AG04449 (cell line): ENCODE measurements at regions of chr1 and their contacts with region 1.

Region 1: DNA sequence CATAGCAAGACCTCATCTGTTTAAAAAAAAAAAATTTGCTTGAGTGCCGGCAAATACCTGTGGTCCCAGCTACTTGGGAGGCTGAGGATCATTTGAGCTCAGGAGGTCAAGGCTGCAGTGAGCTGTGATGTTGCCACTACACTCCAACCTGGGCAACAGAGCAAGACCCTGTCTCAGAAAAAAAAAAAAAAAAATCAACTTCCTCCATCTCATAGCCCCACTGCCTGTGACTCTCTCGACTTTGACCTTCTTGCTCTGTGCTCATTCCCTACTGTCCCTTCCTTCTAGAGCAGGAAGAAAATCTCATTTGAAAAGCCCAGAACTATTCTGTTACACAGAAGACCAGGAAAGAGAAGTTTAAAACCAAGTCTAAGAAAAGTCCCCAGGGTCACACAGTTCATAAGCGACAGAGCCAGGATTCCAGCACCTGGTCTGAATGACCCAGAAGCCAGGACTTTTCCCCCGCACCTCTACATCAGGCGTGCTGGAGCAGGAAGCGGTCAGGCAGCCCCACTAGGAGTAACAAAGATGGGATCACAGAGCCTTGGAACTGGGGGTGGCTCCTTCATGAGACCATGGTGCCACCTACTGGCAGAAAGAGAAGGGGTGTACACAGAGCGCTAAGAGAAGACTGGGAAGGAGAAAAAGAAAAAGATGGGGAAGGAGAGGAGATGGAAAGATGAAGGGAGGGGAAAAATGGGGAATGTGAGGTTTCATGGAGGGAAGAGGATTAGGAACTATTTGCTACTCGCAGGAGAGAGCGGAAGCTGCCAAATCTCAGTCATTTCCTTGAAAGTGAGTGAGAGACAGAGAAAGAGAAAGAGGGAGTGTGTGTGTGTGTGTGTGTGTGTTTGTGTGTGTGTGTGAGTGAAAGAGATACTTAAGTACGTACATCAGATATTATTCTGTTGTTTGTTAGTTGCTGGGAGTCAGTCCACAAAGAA is 3.1 kb upstream of the P3R3URF start:
- DNase-seq: peak; percentile 41
- H3K4me3 ChIP-seq: no peak overlapping the region
- CTCF ChIP-seq: peak; percentile 87

Region 2: GRCh38 chr1:46062651-46063319 is 116.6 kb before region 1 on chr1:
- CTCF ChIA-PET with region 1: interaction called, 10 read pairs
- POLR2A ChIA-PET with region 1: no interaction called
- DNase-seq: no peak
- H3K4me3 ChIP-seq: no peak overlapping the region
- CTCF ChIP-seq: no peak

Region 3: DNA sequence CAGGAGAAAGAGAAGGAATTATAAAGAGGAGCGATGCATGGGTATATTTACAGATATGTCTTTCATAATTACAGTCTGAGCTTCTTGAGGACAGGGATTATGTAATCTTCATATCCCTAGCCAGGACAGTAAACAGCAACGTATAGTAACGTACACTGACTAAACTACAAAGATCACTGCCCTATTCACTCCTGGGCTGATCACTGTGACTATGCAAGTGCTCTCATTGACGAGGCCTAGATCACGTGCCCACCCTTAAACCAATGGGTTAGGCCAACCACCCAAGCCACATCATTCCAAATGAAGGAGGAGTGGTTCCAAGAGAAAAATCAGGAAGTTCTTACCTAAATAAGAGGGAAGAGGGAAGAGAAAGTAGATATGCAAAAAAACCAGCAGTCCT is 65.5 kb before region 1 on chr1:
- CTCF ChIA-PET with region 1: no interaction called
- POLR2A ChIA-PET with region 1: no interaction called
- DNase-seq: no peak
- H3K4me3 ChIP-seq: no peak overlapping the region
- CTCF ChIP-seq: no peak

Region 4: GRCh38 chr1:46166521-46167462 is 12.6 kb before region 1 on chr1:
- CTCF ChIA-PET with region 1: interaction called, 48 read pairs
- POLR2A ChIA-PET with region 1: no interaction called
- DNase-seq: no peak
- H3K4me3 ChIP-seq: peak overlapping the region; percentile 50
- CTCF ChIP-seq: no peak

Region 5: DNA sequence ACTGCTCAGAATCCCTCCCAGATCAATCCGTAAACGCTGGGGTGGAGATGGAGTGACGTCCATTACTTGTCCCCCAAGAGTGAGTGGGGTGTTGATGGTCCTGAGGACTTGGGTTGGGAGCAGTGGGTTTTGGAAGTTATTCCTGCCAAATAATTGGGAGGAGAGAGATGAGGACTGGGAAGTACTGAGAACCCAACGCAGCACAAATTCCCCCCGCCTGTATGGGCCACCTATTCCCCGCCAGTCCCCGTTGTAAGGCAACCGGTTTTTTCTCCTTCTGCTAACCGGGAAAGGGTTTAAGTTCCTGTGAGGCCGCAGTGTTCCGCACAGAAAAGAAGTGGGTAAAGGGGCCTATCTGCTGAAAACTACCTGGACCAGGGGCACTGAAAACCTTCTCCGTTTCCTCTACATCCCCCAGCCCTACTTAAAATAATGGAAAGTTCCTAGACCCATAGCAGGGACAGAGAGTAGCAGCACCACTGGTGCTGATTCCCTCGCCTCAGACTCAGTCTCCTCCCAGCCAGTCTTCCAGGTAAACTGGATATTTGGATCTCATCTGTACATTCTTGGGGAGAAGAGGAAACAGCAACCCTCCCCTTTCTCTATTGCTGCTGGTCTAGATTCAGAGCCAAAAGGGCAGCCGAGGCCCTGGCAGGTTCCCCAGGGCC is 24.5 kb after region 1 on chr1:
- CTCF ChIA-PET with region 1: interaction called, 9 read pairs
- POLR2A ChIA-PET with region 1: interaction called, 11 read pairs
- DNase-seq: no peak
- H3K4me3 ChIP-seq: peak overlapping the region; percentile 87
- CTCF ChIP-seq: no peak